ENCODE measurements at regions of chr7 and their contacts with region 1.

Region 1: DNA sequence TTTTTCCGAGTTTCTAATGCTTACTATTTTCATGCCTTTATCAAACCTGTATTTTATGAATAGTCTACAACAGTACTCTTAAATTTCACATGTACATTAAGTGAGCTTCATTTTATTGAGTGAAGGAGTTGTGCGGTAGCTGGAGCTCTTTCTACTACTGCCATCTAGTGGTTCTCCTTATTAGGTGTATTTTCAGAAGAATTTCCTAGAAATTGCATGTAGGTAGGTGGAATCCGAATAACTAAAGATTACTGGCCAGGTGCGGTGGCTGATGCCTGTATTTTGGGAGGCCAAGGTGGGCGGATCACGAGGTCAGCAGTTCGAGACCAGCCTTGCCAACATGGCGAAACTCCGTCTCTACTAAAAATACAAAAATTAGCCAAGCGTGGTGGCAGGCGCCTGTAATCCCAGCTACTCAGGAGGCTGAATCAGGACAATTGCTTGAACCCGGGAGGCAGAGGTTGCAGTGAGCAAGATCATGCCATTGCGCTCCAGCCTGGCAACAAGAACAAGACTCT is 38.3 kb downstream of the LRRC72 start:
- DNase-seq: no peak
- H3K4me3 Mint-ChIP-seq: no peak overlapping the region
- H3K27ac Mint-ChIP-seq: peak overlapping the region; percentile 48
- H3K4me1 Mint-ChIP-seq: peaks cover 18% of the 10 kb centered on the region
- H3K27me3 Mint-ChIP-seq: peaks cover 6% of the 10 kb centered on the region

Region 2: GRCh38 chr7:16078076-16078952 is 486.7 kb before region 1 on chr7:
- intact Hi-C with region 1: loop called (anchors 1 kb)
- DNase-seq: no peak
- H3K4me3 Mint-ChIP-seq: no peak overlapping the region
- H3K27ac Mint-ChIP-seq: no peak overlapping the region
- H3K4me1 Mint-ChIP-seq: no peaks in the 10 kb centered on the region
- H3K27me3 Mint-ChIP-seq: no peaks in the 10 kb centered on the region

Region 3: GRCh38 chr7:16420649-16421332 is 144.2 kb before region 1 on chr7:
- intact Hi-C with region 1: loop called (anchors 1 kb)
- DNase-seq: peak; percentile 86
- H3K4me3 Mint-ChIP-seq: peak overlapping the region; percentile 91
- H3K27ac Mint-ChIP-seq: peak overlapping the region; percentile 96
- H3K4me1 Mint-ChIP-seq: peaks cover 25% of the 10 kb centered on the region
- H3K27me3 Mint-ChIP-seq: peaks cover 8% of the 10 kb centered on the region

Region 4: GRCh38 chr7:16431646-16432424 is 133.1 kb before region 1 on chr7:
- intact Hi-C with region 1: loop called (anchors 1 kb)
- DNase-seq: no peak
- H3K4me3 Mint-ChIP-seq: no peak overlapping the region
- H3K27ac Mint-ChIP-seq: no peak overlapping the region
- H3K4me1 Mint-ChIP-seq: peaks cover 8% of the 10 kb centered on the region
- H3K27me3 Mint-ChIP-seq: peaks cover 6% of the 10 kb centered on the region

Region 5: GRCh38 chr7:16492513-16493062 is 72.4 kb before region 1 on chr7:
- intact Hi-C with region 1: loop called (anchors 5 kb)
- DNase-seq: no peak
- H3K4me3 Mint-ChIP-seq: no peak overlapping the region
- H3K27ac Mint-ChIP-seq: no peak overlapping the region
- H3K4me1 Mint-ChIP-seq: peaks cover 7% of the 10 kb centered on the region
- H3K27me3 Mint-ChIP-seq: peaks cover 2% of the 10 kb centered on the region

Region 6: DNA sequence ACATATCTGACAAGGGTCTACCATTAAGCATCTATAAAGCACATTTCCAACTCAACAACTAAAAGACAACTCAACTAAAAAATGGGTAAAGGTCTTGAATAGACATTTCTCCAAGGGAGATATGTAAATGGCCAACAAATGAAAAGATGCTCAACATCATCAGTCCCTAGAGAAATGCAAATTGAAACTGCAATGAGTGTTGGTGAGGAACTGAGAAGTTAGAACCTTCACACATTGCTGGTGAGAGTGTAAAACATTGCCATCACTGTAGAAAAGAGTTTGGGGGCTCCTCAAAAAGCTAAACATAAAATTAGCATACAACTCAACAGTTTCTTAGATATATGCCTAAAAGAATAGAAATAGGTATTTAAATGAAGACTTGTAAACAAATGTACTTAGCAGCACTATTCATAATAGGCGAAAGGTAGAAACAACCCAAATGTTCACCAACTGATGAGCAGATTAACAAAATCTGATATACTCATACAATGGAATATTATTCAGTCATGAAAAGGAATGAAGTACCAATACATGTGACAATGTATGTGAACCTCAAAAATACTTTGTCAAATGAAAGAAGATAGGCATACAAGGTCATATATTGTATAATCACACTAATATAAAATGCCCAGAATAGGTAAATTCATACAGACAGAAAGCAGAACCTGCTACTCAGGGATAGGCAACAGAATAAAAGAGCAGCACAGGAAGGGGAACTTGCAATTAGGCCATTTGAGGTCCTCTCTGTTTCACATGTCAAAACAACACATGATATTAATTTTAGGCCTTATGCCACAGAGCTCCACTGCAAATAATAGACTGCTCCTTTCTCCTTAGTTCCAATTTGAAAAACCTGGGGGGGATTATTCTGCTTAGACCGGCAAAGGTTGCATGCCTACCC is 48.9 kb before region 1 on chr7:
- intact Hi-C with region 1: no loop called
- DNase-seq: no peak
- H3K4me3 Mint-ChIP-seq: no peak overlapping the region
- H3K27ac Mint-ChIP-seq: no peak overlapping the region
- H3K4me1 Mint-ChIP-seq: no peaks in the 10 kb centered on the region
- H3K27me3 Mint-ChIP-seq: peaks cover 2% of the 10 kb centered on the region

Region 7: GRCh38 chr7:16543456-16543855 is 21.5 kb before region 1 on chr7:
- intact Hi-C with region 1: no loop called
- DNase-seq: no peak
- H3K4me3 Mint-ChIP-seq: no peak overlapping the region
- H3K27ac Mint-ChIP-seq: no peak overlapping the region
- H3K4me1 Mint-ChIP-seq: no peaks in the 10 kb centered on the region
- H3K27me3 Mint-ChIP-seq: no peaks in the 10 kb centered on the region